Activated T-helper 2 cell treated with anti-CD3 and anti-CD28 coated beads, Interferon-gamma antibody, Interleukin-2, Interleukin-4, amounts not matched to agents 10 μg/mL and 5 μg/mL and 100 μg/mL, durations not matched to agents 14 hours and 24 hours and 36 hours (primary cell): ENCODE measurements at regions of chr6 and their contacts with region 1.

Region 1: DNA sequence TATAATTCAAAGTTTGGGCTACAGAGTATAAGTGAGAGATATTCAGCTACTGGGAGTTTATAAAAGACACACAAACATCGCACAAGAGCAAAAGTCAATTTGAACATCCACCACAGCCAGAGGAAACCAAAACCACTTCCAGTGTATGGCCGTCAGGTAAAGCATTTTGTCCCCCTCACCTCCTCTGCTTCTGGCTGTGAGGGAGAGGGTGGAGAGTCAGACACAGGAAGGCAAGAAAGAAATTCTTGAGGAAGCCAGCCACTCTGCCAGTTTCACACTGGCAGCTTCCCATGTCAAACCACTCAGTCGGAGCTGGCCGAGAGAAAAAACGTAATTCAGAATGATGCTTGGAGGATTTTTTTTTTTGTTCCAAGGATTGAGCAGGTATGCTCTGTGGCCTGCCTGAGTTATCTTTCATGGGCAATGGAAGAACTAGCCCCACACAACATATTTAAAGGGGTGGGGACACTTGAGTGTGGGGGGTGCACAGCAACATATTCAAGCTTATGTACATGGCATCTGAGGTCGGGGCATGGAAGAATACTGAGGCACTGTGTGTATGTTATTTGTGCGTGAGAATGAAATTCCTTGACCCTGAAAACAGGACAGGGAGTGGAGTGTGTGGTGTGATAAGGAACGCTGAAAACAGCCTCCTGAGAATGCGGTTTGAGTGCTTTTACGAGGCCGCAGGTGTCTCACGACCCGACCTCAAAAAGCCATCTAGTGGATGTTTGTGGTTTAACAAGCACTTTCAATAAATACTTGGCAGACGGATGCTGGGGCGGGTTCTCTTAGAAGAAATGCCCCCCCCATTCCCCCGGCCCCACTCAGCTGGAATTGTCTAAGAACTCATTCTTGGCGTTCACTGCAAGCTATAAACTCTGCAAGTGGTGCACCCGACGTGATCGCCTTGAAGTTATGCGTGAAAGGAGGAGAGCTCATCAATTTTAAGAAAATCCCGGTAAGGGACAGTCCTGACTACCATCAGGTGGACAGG is 27.5 kb upstream of the ZBTB22 start:
- DNase-seq: peak; percentile 62
- H3K4me3 Mint-ChIP-seq: peak overlapping the region; percentile 69
- H3K27ac Mint-ChIP-seq: peak overlapping the region; percentile 82
- H3K4me1 Mint-ChIP-seq: peaks cover 24% of the 10 kb centered on the region
- H3K27me3 Mint-ChIP-seq: peaks cover 2% of the 10 kb centered on the region

Region 2: GRCh38 chr6:32609731-32610640 is 735.0 kb before region 1 on chr6:
- intact Hi-C with region 1: loop called (anchors 10 kb)
- DNase-seq: peak; percentile 50
- H3K4me3 Mint-ChIP-seq: no peak overlapping the region
- H3K27ac Mint-ChIP-seq: no peak overlapping the region
- H3K4me1 Mint-ChIP-seq: peaks cover 10% of the 10 kb centered on the region
- H3K27me3 Mint-ChIP-seq: peaks cover 10% of the 10 kb centered on the region

Region 3: GRCh38 chr6:33320315-33321181 is 24.5 kb before region 1 on chr6:
- intact Hi-C with region 1: no loop called
- DNase-seq: no peak
- H3K4me3 Mint-ChIP-seq: peak overlapping the region; percentile 81
- H3K27ac Mint-ChIP-seq: no peak overlapping the region
- H3K4me1 Mint-ChIP-seq: peaks cover 49% of the 10 kb centered on the region
- H3K27me3 Mint-ChIP-seq: no peaks in the 10 kb centered on the region